Activated CD4-positive, alpha-beta T cell treated with anti-CD3 and anti-CD28 coated beads, Interleukin-2, amount 10 ng/mL, durations not matched to agents 7 days and 5 days (primary cell): ENCODE measurements at regions of chr17 and their contacts with region 1.

Region 1: DNA sequence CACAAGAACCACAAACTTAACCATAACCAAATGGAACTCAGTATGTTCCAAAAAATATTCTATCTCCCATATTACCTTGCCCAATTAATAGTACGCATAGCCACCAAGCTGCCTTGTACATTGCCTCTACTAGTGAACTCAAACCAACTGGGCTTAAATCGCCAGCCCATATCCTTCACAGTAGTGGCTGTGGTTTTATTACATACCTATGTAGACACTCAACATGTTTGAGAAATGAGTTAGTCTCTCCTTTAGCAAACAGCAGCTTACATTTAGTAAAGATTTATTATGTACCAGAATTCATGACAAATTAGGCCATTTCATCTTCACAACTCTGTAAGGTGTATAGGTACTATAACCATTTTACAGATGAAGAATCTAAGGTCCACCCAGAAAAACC is 41.4 kb downstream of the GRB2 start:
- DNase-seq: no peak
- H3K4me3 Mint-ChIP-seq: no peak overlapping the region
- H3K27ac Mint-ChIP-seq: no peak overlapping the region
- H3K4me1 Mint-ChIP-seq: peaks cover 87% of the 10 kb centered on the region
- H3K27me3 Mint-ChIP-seq: no peaks in the 10 kb centered on the region

Region 2: DNA sequence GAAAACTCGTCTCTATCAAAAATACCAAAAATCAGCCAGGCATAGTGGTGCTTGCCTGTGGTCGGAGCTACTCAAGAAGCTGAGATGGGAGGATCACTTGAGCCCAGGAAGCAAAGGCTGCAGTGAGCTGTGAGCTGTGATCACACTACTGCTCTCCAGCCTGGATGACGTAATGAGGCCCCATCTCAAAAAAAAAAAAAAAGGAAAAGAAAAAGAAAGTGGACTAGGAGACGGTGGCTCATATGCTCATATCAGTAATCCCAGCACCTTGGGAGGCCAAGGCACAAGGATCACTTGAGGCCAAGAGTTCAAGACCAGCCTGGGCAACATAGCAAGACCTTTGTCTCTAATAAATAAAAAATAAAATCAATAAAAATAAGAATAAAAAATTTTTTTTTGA is 172.5 kb before region 1 on chr17:
- CTCF ChIA-PET with region 1: no interaction called
- POLR2A ChIA-PET with region 1: no interaction called
- DNase-seq: no peak
- H3K4me3 Mint-ChIP-seq: no peak overlapping the region
- H3K27ac Mint-ChIP-seq: no peak overlapping the region
- H3K4me1 Mint-ChIP-seq: peaks cover 14% of the 10 kb centered on the region
- H3K27me3 Mint-ChIP-seq: no peaks in the 10 kb centered on the region

Region 3: DNA sequence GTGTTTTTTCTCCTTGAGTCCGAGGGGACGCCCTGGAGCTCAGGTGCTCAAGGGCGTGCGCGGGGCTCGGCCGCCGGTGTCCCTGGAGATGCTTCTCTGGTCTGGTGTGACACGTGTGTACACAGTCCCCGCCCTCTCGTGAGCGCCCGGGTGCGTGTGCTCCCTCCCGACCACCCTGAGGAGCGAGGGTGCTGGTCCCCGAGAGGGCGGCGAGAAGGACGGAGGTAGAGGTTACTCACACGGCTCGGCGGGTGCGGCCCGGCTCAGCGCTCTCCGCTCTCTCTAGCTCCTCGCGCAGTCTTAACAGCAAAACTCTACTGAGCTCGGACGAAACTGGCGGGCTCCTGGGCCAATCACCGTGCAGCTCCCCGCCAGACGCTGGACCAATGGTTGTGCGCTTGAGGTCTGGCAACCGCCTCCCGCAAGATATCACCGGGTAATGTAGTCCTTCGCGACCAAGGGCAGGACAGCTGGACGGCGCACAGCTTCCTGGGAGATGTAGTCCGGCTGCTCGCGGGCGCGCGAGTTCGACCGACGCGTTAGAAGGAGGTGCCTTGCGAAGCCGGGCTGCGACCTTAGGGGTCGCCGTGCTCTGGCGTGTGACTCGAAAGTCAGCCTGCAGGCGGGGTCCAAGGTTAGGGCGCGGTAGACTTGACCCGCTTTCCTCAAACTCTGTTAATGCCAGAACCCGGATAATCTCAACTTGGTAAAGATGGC is 74.8 kb before region 1 on chr17 and contains the start of gene SLC25A19:
- CTCF ChIA-PET with region 1: no interaction called
- POLR2A ChIA-PET with region 1: no interaction called
- DNase-seq: peak; percentile 99
- H3K4me3 Mint-ChIP-seq: peak within 1 kb of the TSS; percentile 98
- H3K27ac Mint-ChIP-seq: peak within 1 kb of the TSS; percentile 100
- H3K4me1 Mint-ChIP-seq: peaks cover 22% of the 10 kb centered on the region
- H3K27me3 Mint-ChIP-seq: no peaks in the 10 kb centered on the region
- total RNA-seq, gene SLC25A19: 27.6 to 30.5 TPM

Region 4: GRCh38 chr17:75346906-75347305 is 17.2 kb before region 1 on chr17:
- CTCF ChIA-PET with region 1: interaction called, 10 read pairs
- POLR2A ChIA-PET with region 1: no interaction called
- DNase-seq: peak; percentile 14
- H3K4me3 Mint-ChIP-seq: peak overlapping the region; percentile 65
- H3K27ac Mint-ChIP-seq: peak overlapping the region; percentile 82
- H3K4me1 Mint-ChIP-seq: peaks cover 89% of the 10 kb centered on the region
- H3K27me3 Mint-ChIP-seq: no peaks in the 10 kb centered on the region

Region 5: DNA sequence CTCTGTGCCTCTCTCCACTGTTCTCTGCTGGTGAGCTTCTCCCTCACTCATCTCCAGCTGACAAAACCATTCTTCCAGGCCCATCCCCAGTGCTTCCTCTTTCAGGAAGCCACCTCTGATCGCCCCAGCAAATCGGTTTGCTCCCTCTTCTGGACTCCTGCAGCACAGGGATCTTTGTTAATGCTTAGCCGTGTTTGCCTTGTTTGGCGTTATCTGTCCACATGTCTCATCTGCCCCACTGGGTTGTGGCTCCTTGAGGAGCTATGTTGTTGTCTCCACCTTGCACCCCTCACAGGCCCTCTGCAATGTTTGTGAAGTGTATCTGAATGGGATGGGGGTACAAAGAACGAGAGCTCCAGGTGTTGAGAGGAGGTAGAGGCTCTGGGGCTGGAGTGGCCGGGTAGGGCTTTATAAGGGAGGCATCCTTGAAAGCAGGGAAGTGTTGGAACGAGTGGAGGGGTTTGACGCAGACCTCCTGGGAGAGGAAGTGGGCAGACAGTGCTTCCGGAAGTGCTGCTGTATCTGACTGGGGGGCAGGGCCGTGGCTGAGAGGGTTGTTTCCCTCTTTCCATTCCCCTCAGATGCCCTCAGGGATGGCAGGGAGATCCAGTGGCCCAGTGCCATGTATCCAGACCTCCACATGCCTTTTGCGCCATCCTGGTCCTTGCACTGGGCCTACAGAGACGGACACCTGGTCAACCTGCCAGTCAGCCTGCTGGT is 123.4 kb after region 1 on chr17:
- CTCF ChIA-PET with region 1: no interaction called
- POLR2A ChIA-PET with region 1: no interaction called
- DNase-seq: peak; percentile 67
- H3K4me3 Mint-ChIP-seq: peak overlapping the region; percentile 54
- H3K27ac Mint-ChIP-seq: peak overlapping the region; percentile 96
- H3K4me1 Mint-ChIP-seq: peaks cover 26% of the 10 kb centered on the region
- H3K27me3 Mint-ChIP-seq: no peaks in the 10 kb centered on the region